ENCODE measurements at regions of chr1 and their contacts with region 1.

Region 1: GRCh38 chr1:39865762-39866161 is 17.5 kb downstream of the TRIT1 start:
- H3K4me3 Mint-ChIP-seq: no peak overlapping the region
- H3K27ac Mint-ChIP-seq: no peak overlapping the region
- H3K4me1 Mint-ChIP-seq: peaks cover 17% of the 10 kb centered on the region
- H3K27me3 Mint-ChIP-seq: no peaks in the 10 kb centered on the region

Region 2: GRCh38 chr1:39886757-39887231 is 21.0 kb after region 1 on chr1:
- intact Hi-C with region 1: loop called (anchors 2 kb)
- H3K4me3 Mint-ChIP-seq: no peak overlapping the region
- H3K27ac Mint-ChIP-seq: no peak overlapping the region
- H3K4me1 Mint-ChIP-seq: peaks cover 42% of the 10 kb centered on the region
- H3K27me3 Mint-ChIP-seq: no peaks in the 10 kb centered on the region